Mammary epithelial cell (primary cell): ENCODE measurements at regions of chr17 and their contacts with region 1.

Region 1: GRCh38 chr17:33750943-33751701 is 458.0 kb upstream of the ASIC2 start:
- DNase-seq: peak; percentile 28
- H3K4me3 ChIP-seq: peak overlapping the region in 2 of 3 experiments; percentile 32 to 33
- H3K27ac ChIP-seq: no peak overlapping the region
- H3K4me1 ChIP-seq: no peaks in the 10 kb centered on the region
- H3K27me3 ChIP-seq: no peaks in the 10 kb centered on the region
- CTCF ChIP-seq: peak; percentile 85 to 89

Region 2: GRCh38 chr17:32659419-32659842 is 1091.7 kb before region 1 on chr17:
- CTCF ChIA-PET with region 1: no interaction called
- dilution Hi-C with region 1: no loop called
- in situ Hi-C with region 1: loop called in 1 of 2 experiments (anchors 25 kb)
- intact Hi-C with region 1: no loop called
- DNase-seq: peak; percentile 40
- H3K4me3 ChIP-seq: no peak overlapping the region
- H3K27ac ChIP-seq: no peak overlapping the region
- H3K4me1 ChIP-seq: no peaks in the 10 kb centered on the region
- H3K27me3 ChIP-seq: no peaks in the 10 kb centered on the region
- CTCF ChIP-seq: peak; percentile 90 to 99

Region 3: GRCh38 chr17:32769839-32770238 is 981.3 kb before region 1 on chr17:
- CTCF ChIA-PET with region 1: no interaction called
- dilution Hi-C with region 1: no loop called
- in situ Hi-C with region 1: no loop called
- intact Hi-C with region 1: loop called (anchors 5 kb)
- DNase-seq: peak; percentile 40
- H3K4me3 ChIP-seq: no peak overlapping the region
- H3K27ac ChIP-seq: no peak overlapping the region
- H3K4me1 ChIP-seq: no peaks in the 10 kb centered on the region
- H3K27me3 ChIP-seq: no peaks in the 10 kb centered on the region
- CTCF ChIP-seq: peak; percentile 18 to 49

Region 4: DNA sequence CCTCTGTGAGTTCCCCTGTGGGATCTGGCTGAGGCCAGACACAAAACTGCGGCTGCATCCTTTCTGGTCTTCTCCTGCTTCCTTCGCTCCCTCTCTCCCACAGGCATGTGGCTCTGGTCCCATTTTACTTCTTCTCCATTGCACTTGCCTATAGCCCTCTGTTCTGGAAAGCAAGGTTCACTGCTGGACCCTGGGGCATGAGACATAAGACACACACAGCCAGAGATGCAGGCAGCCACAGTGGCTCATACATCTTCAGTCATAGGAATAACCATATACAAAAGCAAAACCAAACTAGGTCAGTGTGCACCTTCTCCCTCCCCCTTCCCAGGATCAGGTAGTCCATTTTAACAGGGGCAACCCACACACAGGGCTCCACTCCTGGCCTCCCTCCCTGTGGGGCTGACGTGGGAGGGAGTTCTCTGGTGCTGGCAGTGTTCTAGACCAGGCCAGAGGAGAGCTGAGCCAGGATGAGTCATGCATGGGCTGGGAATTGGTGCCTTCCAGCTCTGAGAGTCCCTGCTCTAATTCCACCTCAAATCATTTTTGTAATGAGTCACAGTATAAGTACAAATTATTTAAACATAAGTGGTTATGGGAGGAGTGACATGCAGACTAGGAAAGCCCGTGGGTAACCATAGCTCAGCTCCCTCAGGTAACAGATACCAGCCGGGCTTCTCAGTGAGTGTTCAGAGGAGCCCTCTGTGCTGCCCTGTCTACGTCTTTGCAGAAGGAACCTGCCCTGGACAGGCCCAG is 516.0 kb before region 1 on chr17:
- CTCF ChIA-PET with region 1: interaction called, 20 read pairs
- dilution Hi-C with region 1: no loop called
- in situ Hi-C with region 1: no loop called
- intact Hi-C with region 1: no loop called
- DNase-seq: peak; percentile 97
- H3K4me3 ChIP-seq: no peak overlapping the region
- H3K27ac ChIP-seq: peak overlapping the region; percentile 30
- H3K4me1 ChIP-seq: peaks cover 10% of the 10 kb centered on the region
- H3K27me3 ChIP-seq: no peaks in the 10 kb centered on the region
- CTCF ChIP-seq: no peak

Region 5: DNA sequence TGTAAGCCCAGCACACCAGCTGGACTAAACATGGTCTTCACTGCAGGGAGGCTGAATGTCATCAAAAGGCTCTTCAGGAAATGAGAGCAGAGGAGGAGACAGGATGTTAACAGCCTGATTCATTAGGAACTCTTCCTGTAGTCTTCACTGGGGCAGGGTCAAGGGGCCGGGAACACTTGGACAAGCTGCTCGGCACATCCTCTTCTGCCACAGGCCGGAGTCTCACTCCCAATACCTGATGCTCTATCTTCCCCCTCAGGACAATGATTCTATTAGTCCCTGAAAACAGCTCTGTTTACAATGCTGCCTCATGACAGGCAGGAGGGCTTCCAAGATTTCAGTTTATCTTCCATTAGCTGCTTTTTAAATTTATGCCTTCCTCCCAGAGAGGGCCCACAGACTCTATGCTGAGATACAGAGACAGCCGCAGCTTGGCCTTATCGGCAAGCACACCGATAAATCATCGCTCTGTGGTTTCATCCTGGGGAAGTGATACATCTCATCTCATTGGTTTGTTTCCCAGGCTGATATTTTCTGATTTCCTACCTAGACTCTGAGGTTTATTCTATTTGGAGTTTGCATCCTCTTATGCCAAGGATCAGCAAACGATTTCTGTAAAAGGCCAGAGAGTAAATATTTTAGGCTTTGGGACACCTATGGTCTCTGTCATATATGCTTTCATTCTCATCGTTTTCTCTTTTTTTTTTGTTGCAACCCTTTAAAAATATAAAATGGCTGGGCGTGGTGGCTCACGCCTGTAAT is 244.1 kb before region 1 on chr17:
- CTCF ChIA-PET with region 1: no interaction called
- dilution Hi-C with region 1: no loop called
- in situ Hi-C with region 1: no loop called
- intact Hi-C with region 1: no loop called
- DNase-seq: no peak
- H3K4me3 ChIP-seq: no peak overlapping the region
- H3K27ac ChIP-seq: no peak overlapping the region
- H3K4me1 ChIP-seq: no peaks in the 10 kb centered on the region
- H3K27me3 ChIP-seq: no peaks in the 10 kb centered on the region
- CTCF ChIP-seq: no peak

Region 6: GRCh38 chr17:33725675-33726271 is 25.3 kb before region 1 on chr17:
- CTCF ChIA-PET with region 1: interaction called, 3 read pairs
- dilution Hi-C with region 1: no loop called
- in situ Hi-C with region 1: no loop called
- intact Hi-C with region 1: loop called (anchors 1 kb)
- DNase-seq: no peak
- H3K4me3 ChIP-seq: no peak overlapping the region
- H3K27ac ChIP-seq: no peak overlapping the region
- H3K4me1 ChIP-seq: no peaks in the 10 kb centered on the region
- H3K27me3 ChIP-seq: no peaks in the 10 kb centered on the region
- CTCF ChIP-seq: peak; percentile 60 to 71